ENCODE measurements at regions of chr2 and their contacts with region 1.

Region 1: DNA sequence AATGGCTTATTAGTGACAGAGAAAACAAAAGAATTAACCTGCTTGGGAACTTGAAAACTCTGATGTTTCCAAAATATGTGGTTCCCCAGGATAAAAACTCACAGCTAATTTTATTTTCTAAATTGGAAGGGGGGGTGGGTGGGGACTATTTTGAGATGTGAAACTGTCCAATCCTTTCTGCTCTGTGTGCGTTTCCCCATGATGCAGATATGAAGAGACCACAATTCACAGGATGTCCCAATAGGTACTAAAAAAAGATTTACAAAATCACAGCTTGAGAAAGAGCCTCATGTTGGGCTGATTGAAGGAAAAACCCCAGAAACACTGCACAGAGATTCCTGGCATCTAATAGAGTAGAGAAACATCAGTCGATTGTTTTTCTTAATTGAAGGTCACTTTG is 273.2 kb downstream of the ARHGAP15 start:
- DNase-seq: peak in 2 of 14 experiments; percentile 15
- ATAC-seq: no peak
- H3K4me3 ChIP-seq: no peak overlapping the region
- H3K4me3 Mint-ChIP-seq: no peak overlapping the region
- H3K27ac ChIP-seq: no peak overlapping the region
- H3K27ac Mint-ChIP-seq: no peak overlapping the region
- H3K4me1 ChIP-seq: no peaks in the 10 kb centered on the region
- H3K4me1 Mint-ChIP-seq: peaks cover 70% of the 10 kb centered on the region
- H3K27me3 ChIP-seq: no peaks in the 10 kb centered on the region
- H3K27me3 Mint-ChIP-seq: no peaks in the 10 kb centered on the region
- CTCF ChIP-seq: no peak

Region 2: DNA sequence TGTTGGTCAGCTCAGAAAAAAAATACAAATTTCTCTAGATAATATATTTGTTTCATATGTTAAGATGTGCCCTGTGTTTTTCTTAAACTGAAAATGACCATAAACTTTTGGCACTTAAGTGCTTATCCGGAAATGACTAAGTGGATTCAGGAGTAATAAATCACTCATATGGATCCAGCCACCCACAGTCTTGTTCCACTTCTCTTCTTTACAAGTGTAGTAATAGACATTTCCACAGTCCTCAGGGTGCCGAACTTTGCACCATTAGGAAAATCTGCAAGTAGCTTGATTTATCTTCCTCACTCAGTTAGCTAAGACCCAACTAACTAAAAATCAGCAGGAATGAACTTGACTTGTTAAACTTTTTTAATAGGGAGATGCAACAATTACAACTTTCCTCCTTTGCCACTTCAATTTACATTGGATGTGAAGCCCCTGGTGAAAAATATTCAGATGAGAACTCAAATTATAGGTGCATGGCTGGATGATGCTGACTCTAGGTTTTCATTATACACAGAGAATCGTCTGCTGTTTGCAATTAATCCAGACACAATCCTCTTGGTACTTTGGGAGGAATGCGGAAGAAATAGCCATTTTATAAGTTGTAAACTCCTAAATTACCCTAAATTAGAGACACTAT is 49.3 kb after region 1 on chr2:
- CTCF ChIA-PET with region 1: no interaction called
- POLR2A ChIA-PET with region 1: no interaction called
- intact Hi-C with region 1: loop called in 1 of 2 experiments (anchors 5 kb)
- DNase-seq: no peak
- ATAC-seq: no peak
- H3K4me3 ChIP-seq: no peak overlapping the region
- H3K4me3 Mint-ChIP-seq: peak overlapping the region; percentile 26
- H3K27ac ChIP-seq: no peak overlapping the region
- H3K27ac Mint-ChIP-seq: peak overlapping the region; percentile 55
- H3K4me1 ChIP-seq: peaks cover 2% of the 10 kb centered on the region
- H3K4me1 Mint-ChIP-seq: peaks cover 75% of the 10 kb centered on the region
- H3K27me3 ChIP-seq: no peaks in the 10 kb centered on the region
- H3K27me3 Mint-ChIP-seq: no peaks in the 10 kb centered on the region
- CTCF ChIP-seq: no peak

Region 3: DNA sequence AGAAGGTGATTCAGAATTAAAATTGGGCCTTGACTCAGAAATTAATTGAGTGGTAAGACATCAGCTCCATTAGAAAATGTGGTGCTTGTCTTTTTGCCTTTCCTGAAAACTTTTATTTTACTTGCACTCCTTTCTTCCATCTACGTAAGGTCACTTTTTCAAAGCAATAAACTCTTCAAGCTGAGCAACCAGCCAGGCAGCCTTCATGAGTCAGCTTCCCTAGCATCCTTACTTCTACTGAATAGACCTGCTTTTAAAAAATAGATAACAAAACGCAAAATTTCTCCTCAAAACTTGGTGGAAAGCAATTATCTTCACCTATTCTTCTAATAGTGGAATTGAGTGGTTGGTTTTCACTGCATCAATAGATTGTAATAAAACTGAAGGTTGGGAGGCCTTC is 231.0 kb after region 1 on chr2:
- CTCF ChIA-PET with region 1: no interaction called
- POLR2A ChIA-PET with region 1: no interaction called
- intact Hi-C with region 1: no loop called
- DNase-seq: no peak
- ATAC-seq: no peak
- H3K4me3 ChIP-seq: no peak overlapping the region
- H3K4me3 Mint-ChIP-seq: no peak overlapping the region
- H3K27ac ChIP-seq: no peak overlapping the region
- H3K27ac Mint-ChIP-seq: no peak overlapping the region
- H3K4me1 ChIP-seq: no peaks in the 10 kb centered on the region
- H3K4me1 Mint-ChIP-seq: peaks cover 11% of the 10 kb centered on the region
- H3K27me3 ChIP-seq: no peaks in the 10 kb centered on the region
- H3K27me3 Mint-ChIP-seq: no peaks in the 10 kb centered on the region
- CTCF ChIP-seq: no peak